Pancreas (tissue), 10 donors: ENCODE measurements at regions of chr7 and their contacts with region 1.

Region 1: DNA sequence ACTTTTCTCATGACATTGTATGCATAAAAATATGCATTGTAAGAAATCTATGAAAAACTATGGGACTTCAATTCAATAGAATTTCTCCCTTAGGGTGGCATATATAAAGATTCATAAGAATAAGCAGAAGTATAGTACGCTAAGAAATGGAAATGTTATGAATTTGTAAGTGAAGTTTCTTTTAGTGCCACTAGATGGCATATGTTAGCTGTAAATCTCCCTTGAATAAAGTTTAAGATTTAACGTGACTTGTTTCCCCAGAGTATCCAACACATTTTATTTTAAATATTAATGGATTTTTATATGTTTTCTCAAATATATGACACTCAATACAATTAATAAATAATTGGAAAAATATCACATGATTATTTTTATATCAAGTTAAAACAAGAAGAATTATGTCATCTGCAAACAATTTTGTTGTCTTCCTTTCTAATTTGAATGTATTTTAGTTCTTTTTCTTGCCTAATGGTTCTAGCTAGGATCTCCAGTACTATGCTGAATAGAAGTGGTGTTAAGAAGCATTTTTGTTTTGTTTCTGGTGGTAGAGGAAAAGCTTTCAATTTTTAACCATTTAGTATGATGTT is 287.2 kb downstream of the HGF start:
- DNase-seq: no peak
- ATAC-seq: peak in 3 of 4 donors; percentile 38 to 56 (median 42)
- H3K4me3 ChIP-seq: no peak overlapping the region
- H3K27ac ChIP-seq: no peak overlapping the region
- H3K4me1 ChIP-seq: no peaks in the 10 kb centered on the region
- H3K27me3 ChIP-seq: no peaks in the 10 kb centered on the region
- CTCF ChIP-seq: peak in 3 of 4 donors; percentile 47 to 56 (median 56)

Region 2: GRCh38 chr7:82007315-82007714 is 524.6 kb after region 1 on chr7:
- intact Hi-C with region 1: loop called in 2 of 3 experiments (anchors 10 kb)
- DNase-seq: no peak
- ATAC-seq: peak in 1 of 4 donors; percentile 32
- H3K4me3 ChIP-seq: no peak overlapping the region
- H3K27ac ChIP-seq: no peak overlapping the region
- H3K4me1 ChIP-seq: no peaks in the 10 kb centered on the region
- H3K27me3 ChIP-seq: no peaks in the 10 kb centered on the region
- CTCF ChIP-seq: no peak

Region 3: GRCh38 chr7:82017334-82017943 is 534.7 kb after region 1 on chr7:
- intact Hi-C with region 1: loop called in 1 of 3 experiments (anchors 10 kb)
- DNase-seq: no peak
- ATAC-seq: peak in 3 of 4 donors; percentile 68 to 70 (median 70)
- H3K4me3 ChIP-seq: no peak overlapping the region
- H3K27ac ChIP-seq: no peak overlapping the region
- H3K4me1 ChIP-seq: no peaks in the 10 kb centered on the region
- H3K27me3 ChIP-seq: peaks cover 0 to 4% (median 0%) of the 10 kb centered on the region in 4 donors
- CTCF ChIP-seq: peak in 2 of 4 donors; percentile 12 to 28